Common myeloid progenitor, CD34-positive (primary cell): ENCODE measurements at regions of chr2 and their contacts with region 1.

Region 1: DNA sequence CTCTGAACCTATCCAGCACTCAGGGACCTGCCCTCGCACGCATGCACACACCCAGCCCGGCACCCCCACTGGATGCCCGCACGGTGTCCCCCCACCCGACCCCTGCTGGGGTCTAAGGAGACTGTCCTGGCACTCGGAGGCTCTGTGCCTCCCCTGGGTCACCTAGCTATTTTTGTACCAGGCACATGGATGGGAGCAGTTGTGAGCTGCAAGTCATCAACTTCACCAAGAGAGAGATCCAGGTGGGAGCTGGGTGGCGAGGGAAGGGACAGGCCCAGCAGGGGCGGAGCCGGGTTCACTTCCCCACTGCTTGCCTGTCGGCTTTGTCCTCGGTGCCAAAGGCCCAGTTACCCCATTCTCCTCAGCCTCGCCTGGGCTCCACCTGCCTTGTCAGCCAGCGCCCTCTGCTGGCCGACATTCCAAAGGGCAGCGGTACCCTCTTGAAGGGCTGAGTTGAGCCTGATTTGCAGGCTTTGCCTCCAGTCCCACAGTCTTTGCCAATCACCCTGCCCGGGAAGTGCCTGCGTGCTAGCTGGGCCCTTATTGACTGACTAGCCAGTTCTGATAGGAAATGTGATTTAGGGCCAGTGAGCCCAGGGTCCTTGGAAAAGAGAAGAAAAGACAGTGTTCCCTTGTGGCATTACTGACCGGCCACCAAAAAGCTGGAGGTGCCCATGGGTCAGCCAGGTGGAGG is 5.8 kb downstream of the NT5DC4 start:
- DNase-seq: peak; percentile 92 to 96 (median 94)
- H3K4me3 ChIP-seq: no peak overlapping the region
- H3K27ac ChIP-seq: no peak overlapping the region
- H3K4me1 ChIP-seq: peaks cover 0 to 56% (median 30%) of the 10 kb centered on the region in 4 experiments
- H3K27me3 ChIP-seq: no peaks in the 10 kb centered on the region

Region 2: DNA sequence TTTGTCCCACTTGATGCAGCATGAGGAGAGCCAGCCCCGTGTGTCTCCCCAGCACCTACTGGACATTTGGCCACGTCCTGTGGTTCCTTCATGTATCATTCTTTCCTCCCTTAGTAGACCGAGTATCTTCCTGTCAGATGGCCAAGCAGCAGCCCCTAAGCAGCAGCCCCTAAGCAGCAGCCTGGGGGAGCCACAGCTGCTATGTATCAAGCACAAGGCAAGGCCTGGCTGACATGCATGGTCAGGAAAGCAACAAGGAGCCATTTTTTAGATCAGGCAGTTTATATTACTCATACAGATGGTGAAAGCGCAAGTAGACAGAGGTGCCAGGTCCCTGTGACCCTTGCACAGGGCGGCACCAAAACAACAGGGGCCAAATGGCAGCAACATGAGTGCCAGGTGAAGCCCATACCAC is 120.1 kb before region 1 on chr2:
- CTCF ChIA-PET with region 1: interaction called, 158 read pairs
- POLR2A ChIA-PET with region 1: no interaction called
- DNase-seq: no peak
- H3K4me3 ChIP-seq: no peak overlapping the region
- H3K27ac ChIP-seq: no peak overlapping the region
- H3K4me1 ChIP-seq: no peaks in the 10 kb centered on the region
- H3K27me3 ChIP-seq: no peaks in the 10 kb centered on the region

Region 3: GRCh38 chr2:112645310-112646101 is 81.1 kb before region 1 on chr2 and contains the start of gene SLC20A1:
- CTCF ChIA-PET with region 1: interaction called, 109 read pairs
- POLR2A ChIA-PET with region 1: interaction called, 6 read pairs
- DNase-seq: peak; percentile 96 to 98 (median 98)
- H3K4me3 ChIP-seq: peak within 1 kb of the TSS; percentile 84 to 98 (median 90)
- H3K27ac ChIP-seq: peak within 1 kb of the TSS; percentile 57 to 89
- H3K4me1 ChIP-seq: peaks cover 13 to 79% (median 55%) of the 10 kb centered on the region in 4 experiments
- H3K27me3 ChIP-seq: no peaks in the 10 kb centered on the region

Region 4: DNA sequence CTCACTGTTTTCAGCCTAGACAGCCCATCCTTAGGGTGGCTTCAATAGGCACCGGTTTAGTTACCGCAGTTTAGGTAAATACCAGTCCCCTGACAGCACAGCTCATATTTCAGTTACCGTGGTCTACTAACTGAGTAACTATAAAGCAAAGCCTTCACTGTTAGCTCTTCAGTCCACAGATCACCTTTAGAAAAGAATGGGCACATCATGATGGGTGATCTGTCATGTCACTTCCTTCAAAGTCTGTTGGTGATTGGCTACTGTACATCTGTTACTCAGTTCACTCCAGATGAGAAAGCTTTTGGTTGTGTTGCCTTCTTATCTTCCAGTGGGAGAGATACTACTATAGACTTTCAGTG is 59.9 kb before region 1 on chr2:
- CTCF ChIA-PET with region 1: interaction called, 28 read pairs
- POLR2A ChIA-PET with region 1: no interaction called
- DNase-seq: peak in 2 of 3 donors; percentile 38 to 39
- H3K4me3 ChIP-seq: no peak overlapping the region
- H3K27ac ChIP-seq: no peak overlapping the region
- H3K4me1 ChIP-seq: peaks cover 0 to 37% (median 13%) of the 10 kb centered on the region in 4 experiments
- H3K27me3 ChIP-seq: no peaks in the 10 kb centered on the region

Region 5: GRCh38 chr2:112692496-112692911 is 34.1 kb before region 1 on chr2:
- CTCF ChIA-PET with region 1: interaction called, 210 read pairs
- POLR2A ChIA-PET with region 1: no interaction called
- DNase-seq: peak; percentile 72 to 94 (median 94)
- H3K4me3 ChIP-seq: no peak overlapping the region
- H3K27ac ChIP-seq: peak overlapping the region in 1 of 2 experiments; percentile 19
- H3K4me1 ChIP-seq: peaks cover 3 to 43% (median 25%) of the 10 kb centered on the region in 4 experiments
- H3K27me3 ChIP-seq: no peaks in the 10 kb centered on the region

Region 6: GRCh38 chr2:112712903-112713584 is 13.6 kb before region 1 on chr2:
- CTCF ChIA-PET with region 1: interaction called, 174 read pairs
- POLR2A ChIA-PET with region 1: interaction called, 11 read pairs
- DNase-seq: no peak
- H3K4me3 ChIP-seq: no peak overlapping the region
- H3K27ac ChIP-seq: no peak overlapping the region
- H3K4me1 ChIP-seq: peaks cover 14 to 40% (median 28%) of the 10 kb centered on the region in 4 experiments
- H3K27me3 ChIP-seq: no peaks in the 10 kb centered on the region

Region 7: GRCh38 chr2:112749755-112750559 is 23.3 kb after region 1 on chr2:
- CTCF ChIA-PET with region 1: interaction called, 57 read pairs
- POLR2A ChIA-PET with region 1: no interaction called
- DNase-seq: peak; percentile 88 to 95 (median 94)
- H3K4me3 ChIP-seq: peak overlapping the region in 3 of 7 experiments; percentile 19 to 31 (median 25)
- H3K27ac ChIP-seq: peak overlapping the region; percentile 48 to 78
- H3K4me1 ChIP-seq: peaks cover 5 to 30% (median 13%) of the 10 kb centered on the region in 4 experiments
- H3K27me3 ChIP-seq: no peaks in the 10 kb centered on the region

Region 8: GRCh38 chr2:113980946-113981345 is 1254.3 kb after region 1 on chr2:
- CTCF ChIA-PET with region 1: no interaction called
- POLR2A ChIA-PET with region 1: no interaction called
- DNase-seq: peak in 2 of 3 donors; percentile 14 to 39
- H3K4me3 ChIP-seq: no peak overlapping the region
- H3K27ac ChIP-seq: no peak overlapping the region
- H3K4me1 ChIP-seq: peaks cover 0 to 17% (median 4%) of the 10 kb centered on the region in 4 experiments
- H3K27me3 ChIP-seq: no peaks in the 10 kb centered on the region